Activated B cell treated with CpG ODN at 0.5 μM for 24 hours (primary cell): ENCODE measurements at regions of chr16 and their contacts with region 1.

Region 1: DNA sequence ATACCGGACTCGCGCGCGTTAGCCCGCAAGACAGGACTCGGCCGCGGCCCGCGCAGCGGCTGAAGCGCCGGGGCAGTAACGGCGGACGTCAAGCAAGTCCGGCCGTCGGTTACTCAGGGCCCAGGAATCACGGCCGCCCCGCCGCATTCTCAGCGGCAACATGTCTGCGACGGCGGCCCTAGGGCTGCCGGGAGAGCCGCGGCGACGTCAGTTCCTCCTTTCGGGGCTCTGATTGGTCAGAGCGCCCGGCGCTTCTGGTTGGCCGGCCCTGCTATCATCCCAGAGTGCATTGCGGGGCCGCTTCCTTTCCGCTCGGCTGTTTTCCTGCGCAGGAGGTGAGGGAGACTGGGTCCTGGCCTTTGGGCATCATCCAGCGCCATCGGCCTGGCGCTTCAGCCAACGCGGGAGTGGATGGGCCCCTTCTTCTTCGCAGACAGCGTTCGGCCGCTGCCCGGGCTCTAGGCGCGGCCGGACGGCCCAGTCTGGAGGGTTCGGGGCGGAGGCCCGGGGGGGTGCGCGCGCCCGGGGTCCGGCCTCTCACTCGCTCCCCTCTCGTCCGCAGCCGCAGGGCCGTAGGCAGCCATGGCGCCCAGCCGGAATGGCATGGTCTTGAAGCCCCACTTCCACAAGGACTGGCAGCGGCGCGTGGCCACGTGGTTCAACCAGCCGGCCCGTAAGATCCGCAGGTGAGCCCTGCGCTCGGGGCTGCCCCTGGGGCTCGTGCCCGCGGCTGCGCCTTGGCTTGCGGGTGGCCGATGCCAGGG is at the start of gene RPL13:
- DNase-seq: peak; percentile 83
- ATAC-seq: peak; percentile 92
- H3K4me3 Mint-ChIP-seq: peak within 1 kb of the TSS; percentile 96
- H3K27ac Mint-ChIP-seq: peak within 1 kb of the TSS; percentile 97
- H3K4me1 Mint-ChIP-seq: peaks cover 48% of the 10 kb centered on the region
- H3K27me3 Mint-ChIP-seq: no peaks in the 10 kb centered on the region
- CTCF ChIP-seq: no peak
- total RNA-seq, gene RPL13: 3,566 and 4,063 TPM in 2 replicates

Region 2: GRCh38 chr16:88811769-88812512 is 748.6 kb before region 1 on chr16 and contains the start of gene APRT:
- CTCF ChIA-PET with region 1: no interaction called
- POLR2A ChIA-PET with region 1: no interaction called
- intact Hi-C with region 1: loop called (anchors 2 kb)
- DNase-seq: peak; percentile 99
- ATAC-seq: peak; percentile 86
- H3K4me3 Mint-ChIP-seq: peak within 1 kb of the TSS; percentile 91
- H3K27ac Mint-ChIP-seq: peak within 1 kb of the TSS; percentile 97
- H3K4me1 Mint-ChIP-seq: peaks cover 17% of the 10 kb centered on the region
- H3K27me3 Mint-ChIP-seq: no peaks in the 10 kb centered on the region
- CTCF ChIP-seq: no peak
- total RNA-seq, gene APRT: 198 and 209 TPM in 2 replicates

Region 3: GRCh38 chr16:89241187-89242007 is 319.2 kb before region 1 on chr16:
- CTCF ChIA-PET with region 1: interaction called, 3 read pairs
- POLR2A ChIA-PET with region 1: no interaction called
- intact Hi-C with region 1: loop called (anchors 1 kb)
- DNase-seq: peak; percentile 75
- ATAC-seq: peak; percentile 77
- H3K4me3 Mint-ChIP-seq: peak overlapping the region; percentile 99
- H3K27ac Mint-ChIP-seq: peak overlapping the region; percentile 99
- H3K4me1 Mint-ChIP-seq: peaks cover 29% of the 10 kb centered on the region
- H3K27me3 Mint-ChIP-seq: no peaks in the 10 kb centered on the region
- CTCF ChIP-seq: no peak

Region 4: GRCh38 chr16:89335803-89336485 is 224.6 kb before region 1 on chr16:
- CTCF ChIA-PET with region 1: no interaction called
- POLR2A ChIA-PET with region 1: no interaction called
- intact Hi-C with region 1: loop called (anchors 1 kb)
- DNase-seq: no peak
- ATAC-seq: no peak
- H3K4me3 Mint-ChIP-seq: no peak overlapping the region
- H3K27ac Mint-ChIP-seq: no peak overlapping the region
- H3K4me1 Mint-ChIP-seq: peaks cover 71% of the 10 kb centered on the region
- H3K27me3 Mint-ChIP-seq: no peaks in the 10 kb centered on the region
- CTCF ChIP-seq: no peak

Region 5: GRCh38 chr16:89460553-89460952 is 100.0 kb before region 1 on chr16:
- CTCF ChIA-PET with region 1: no interaction called
- POLR2A ChIA-PET with region 1: no interaction called
- intact Hi-C with region 1: no loop called
- DNase-seq: no peak
- ATAC-seq: peak; percentile 18
- H3K4me3 Mint-ChIP-seq: no peak overlapping the region
- H3K27ac Mint-ChIP-seq: no peak overlapping the region
- H3K4me1 Mint-ChIP-seq: peaks cover 48% of the 10 kb centered on the region
- H3K27me3 Mint-ChIP-seq: no peaks in the 10 kb centered on the region
- CTCF ChIP-seq: no peak

Region 6: DNA sequence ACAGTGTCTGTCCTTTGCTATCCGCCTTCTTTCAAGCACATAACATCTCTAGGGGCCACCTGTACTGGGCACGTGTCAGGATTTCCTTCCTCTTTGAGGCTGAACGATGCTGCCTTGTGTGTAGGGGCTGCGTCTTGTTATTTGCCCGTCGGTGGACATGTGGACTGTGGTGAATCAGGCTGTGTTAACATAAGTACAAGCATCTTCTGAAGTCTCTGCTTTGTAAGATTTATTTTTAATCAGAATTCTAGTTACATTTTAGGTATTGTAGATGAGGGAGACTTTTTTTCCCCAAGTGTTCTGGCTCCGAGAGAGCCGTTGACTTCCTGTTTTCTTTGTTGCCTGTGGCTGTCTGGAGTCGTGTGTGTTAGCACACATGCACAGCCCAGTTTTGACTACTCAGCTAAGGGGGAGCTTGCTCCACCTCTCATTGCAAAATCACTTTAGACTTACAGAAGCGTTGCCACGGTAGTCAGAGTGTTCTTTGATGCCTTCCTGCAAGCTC is 26.3 kb before region 1 on chr16:
- CTCF ChIA-PET with region 1: no interaction called
- POLR2A ChIA-PET with region 1: interaction called, 3 read pairs
- intact Hi-C with region 1: loop called (anchors 1 kb)
- DNase-seq: peak; percentile 21
- ATAC-seq: peak; percentile 91
- H3K4me3 Mint-ChIP-seq: peak overlapping the region; percentile 68
- H3K27ac Mint-ChIP-seq: peak overlapping the region; percentile 62
- H3K4me1 Mint-ChIP-seq: peaks cover 22% of the 10 kb centered on the region
- H3K27me3 Mint-ChIP-seq: no peaks in the 10 kb centered on the region
- CTCF ChIP-seq: no peak

Region 7: DNA sequence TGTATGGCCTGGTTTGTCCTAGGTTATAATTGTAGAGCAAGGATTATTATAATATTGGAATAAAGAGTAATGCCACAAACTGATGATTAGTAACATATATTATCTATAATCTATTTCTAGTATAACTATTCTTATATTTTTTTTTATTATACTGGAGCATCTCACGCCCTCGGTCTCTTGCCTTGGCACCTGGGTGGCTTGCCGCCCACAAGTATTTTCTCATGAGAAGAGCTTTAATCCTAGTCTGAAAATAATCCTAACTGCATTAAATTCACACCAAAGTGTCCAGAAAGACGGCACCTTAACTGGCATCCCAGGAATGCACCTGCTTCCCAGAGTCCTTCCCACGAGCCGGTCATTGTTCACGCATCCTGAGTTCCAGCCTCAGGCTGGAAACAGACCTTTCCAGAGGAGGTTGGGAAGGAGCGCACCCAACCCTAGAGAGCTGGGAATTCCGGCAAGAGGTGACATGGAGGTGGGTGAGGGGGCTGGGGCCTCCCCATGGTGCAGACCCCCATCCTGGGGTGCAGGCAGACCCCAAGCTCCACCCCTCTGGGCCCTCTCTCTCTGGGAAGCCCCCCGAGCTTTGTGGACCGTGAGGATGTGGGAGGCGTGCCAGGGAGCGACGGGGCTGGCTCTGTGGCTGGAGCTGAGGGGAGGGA is 81.0 kb after region 1 on chr16:
- CTCF ChIA-PET with region 1: no interaction called
- POLR2A ChIA-PET with region 1: no interaction called
- intact Hi-C with region 1: loop called (anchors 5 kb)
- DNase-seq: no peak
- ATAC-seq: no peak
- H3K4me3 Mint-ChIP-seq: peak overlapping the region; percentile 71
- H3K27ac Mint-ChIP-seq: no peak overlapping the region
- H3K4me1 Mint-ChIP-seq: peaks cover 8% of the 10 kb centered on the region
- H3K27me3 Mint-ChIP-seq: no peaks in the 10 kb centered on the region
- CTCF ChIP-seq: no peak